Breast epithelium (tissue), 4 donors: ENCODE measurements at regions of chr16 and their contacts with region 1.

Region 1: GRCh38 chr16:86734543-86735480 is 156.5 kb downstream of the FOXL1 start:
- DNase-seq: no peak
- H3K4me3 ChIP-seq: no peak overlapping the region
- H3K27ac ChIP-seq: no peak overlapping the region
- H3K4me1 ChIP-seq: no peaks in the 10 kb centered on the region
- H3K27me3 ChIP-seq: peaks cover 0 to 14% of the 10 kb centered on the region in 2 donors
- CTCF ChIP-seq: no peak
- POLR2A ChIP-seq: no peak

Region 2: GRCh38 chr16:86355538-86355937 is 379.3 kb before region 1 on chr16:
- intact Hi-C with region 1: no loop called
- DNase-seq: no peak
- H3K4me3 ChIP-seq: no peak overlapping the region
- H3K27ac ChIP-seq: no peak overlapping the region
- H3K4me1 ChIP-seq: no peaks in the 10 kb centered on the region
- H3K27me3 ChIP-seq: peaks cover 2 to 87% of the 10 kb centered on the region in 2 donors
- CTCF ChIP-seq: no peak
- POLR2A ChIP-seq: no peak

Region 3: GRCh38 chr16:86692426-86692825 is 42.4 kb before region 1 on chr16:
- intact Hi-C with region 1: loop called (anchors 1 kb)
- DNase-seq: no peak
- H3K4me3 ChIP-seq: no peak overlapping the region
- H3K27ac ChIP-seq: no peak overlapping the region
- H3K4me1 ChIP-seq: no peaks in the 10 kb centered on the region
- H3K27me3 ChIP-seq: no peaks in the 10 kb centered on the region
- CTCF ChIP-seq: no peak
- POLR2A ChIP-seq: no peak

Region 4: GRCh38 chr16:86755571-86756006 is 20.8 kb after region 1 on chr16:
- intact Hi-C with region 1: loop called (anchors 1 kb)
- DNase-seq: no peak
- H3K4me3 ChIP-seq: no peak overlapping the region
- H3K27ac ChIP-seq: no peak overlapping the region
- H3K4me1 ChIP-seq: no peaks in the 10 kb centered on the region
- H3K27me3 ChIP-seq: peaks cover 0 to 13% of the 10 kb centered on the region in 2 donors
- CTCF ChIP-seq: no peak
- POLR2A ChIP-seq: no peak

Region 5: DNA sequence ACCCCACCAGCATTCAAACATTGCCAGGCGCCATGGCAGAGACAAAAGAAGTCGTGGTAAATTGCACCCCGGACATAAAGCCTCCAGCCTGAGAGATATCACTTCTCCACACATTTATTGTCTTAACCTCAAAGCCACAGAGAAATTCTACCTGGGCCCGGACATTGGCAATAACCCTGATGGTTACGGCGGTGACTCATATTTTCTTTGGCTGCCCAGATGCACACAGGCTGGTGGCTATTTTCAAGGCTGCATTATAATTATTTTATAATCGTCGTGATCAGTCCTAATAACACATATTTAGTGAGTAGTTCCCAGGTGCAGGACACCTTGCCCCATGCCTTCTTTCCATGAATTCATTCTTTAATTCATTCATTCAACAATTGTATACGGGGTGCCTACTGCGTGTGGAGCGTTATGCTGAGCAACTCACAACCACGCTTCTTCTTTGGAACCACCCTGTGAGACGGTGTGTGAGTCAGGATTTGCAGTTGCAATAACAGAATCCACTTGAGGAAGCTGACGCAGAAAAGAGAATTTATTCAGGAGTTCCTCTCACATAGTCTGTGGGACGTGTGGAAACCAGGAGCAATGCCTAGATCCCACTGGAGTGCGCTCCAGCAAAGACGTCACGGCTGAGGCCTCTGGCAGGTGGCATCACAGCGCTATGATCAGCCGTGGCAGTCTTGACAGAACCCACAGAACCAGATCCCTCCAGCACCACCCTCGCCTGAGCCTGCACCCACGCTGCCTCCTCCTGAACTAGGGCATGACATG is 89.3 kb after region 1 on chr16:
- intact Hi-C with region 1: no loop called
- DNase-seq: no peak
- H3K4me3 ChIP-seq: no peak overlapping the region
- H3K27ac ChIP-seq: no peak overlapping the region
- H3K4me1 ChIP-seq: no peaks in the 10 kb centered on the region
- H3K27me3 ChIP-seq: peaks cover 0 to 64% of the 10 kb centered on the region in 2 donors
- CTCF ChIP-seq: no peak
- POLR2A ChIP-seq: no peak

Region 6: GRCh38 chr16:87017365-87018012 is 282.7 kb after region 1 on chr16:
- intact Hi-C with region 1: no loop called
- DNase-seq: no peak
- H3K4me3 ChIP-seq: no peak overlapping the region
- H3K27ac ChIP-seq: no peak overlapping the region
- H3K4me1 ChIP-seq: no peaks in the 10 kb centered on the region
- H3K27me3 ChIP-seq: peaks cover 0 to 14% of the 10 kb centered on the region in 2 donors
- CTCF ChIP-seq: no peak
- POLR2A ChIP-seq: no peak